Activated CD4-positive, alpha-beta memory T cell treated with anti-CD3 and anti-CD28 coated beads for 36 hours (primary cell): ENCODE measurements at regions of chr9 and their contacts with region 1.

Region 1: DNA sequence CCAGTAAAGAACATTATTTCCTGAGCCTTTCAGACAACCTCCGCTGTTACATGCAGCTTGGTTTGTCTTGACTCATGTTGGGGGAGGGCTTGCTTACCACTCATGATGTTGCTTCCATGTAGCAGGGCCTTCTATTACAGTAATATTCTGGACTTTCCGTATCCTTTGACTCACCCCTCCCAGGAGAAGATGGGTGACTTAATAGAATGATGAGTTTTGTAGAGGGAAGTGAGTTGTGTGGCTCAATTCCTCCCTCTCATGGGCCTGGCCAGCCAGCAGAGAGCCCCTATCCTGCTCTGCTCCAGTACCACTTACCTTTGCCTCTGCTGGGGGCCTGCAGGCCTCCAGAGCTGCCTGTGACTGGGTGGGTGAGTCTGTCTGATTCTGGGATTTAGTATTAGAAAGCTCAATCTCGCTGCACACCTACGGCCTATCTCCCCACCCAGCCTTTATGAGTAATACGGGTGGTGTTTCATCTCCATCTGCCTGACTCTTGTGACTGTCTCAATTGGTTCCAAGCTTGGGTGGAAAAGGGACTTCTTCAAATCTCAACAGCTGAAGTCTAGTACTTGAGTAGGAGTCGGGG is 52.6 kb upstream of the KLF9 start:
- DNase-seq: peak; percentile 72
- H3K4me3 Mint-ChIP-seq: peak overlapping the region; percentile 10
- H3K27ac Mint-ChIP-seq: peak overlapping the region; percentile 91
- H3K4me1 Mint-ChIP-seq: peaks cover 56% of the 10 kb centered on the region
- H3K27me3 Mint-ChIP-seq: no peaks in the 10 kb centered on the region

Region 2: DNA sequence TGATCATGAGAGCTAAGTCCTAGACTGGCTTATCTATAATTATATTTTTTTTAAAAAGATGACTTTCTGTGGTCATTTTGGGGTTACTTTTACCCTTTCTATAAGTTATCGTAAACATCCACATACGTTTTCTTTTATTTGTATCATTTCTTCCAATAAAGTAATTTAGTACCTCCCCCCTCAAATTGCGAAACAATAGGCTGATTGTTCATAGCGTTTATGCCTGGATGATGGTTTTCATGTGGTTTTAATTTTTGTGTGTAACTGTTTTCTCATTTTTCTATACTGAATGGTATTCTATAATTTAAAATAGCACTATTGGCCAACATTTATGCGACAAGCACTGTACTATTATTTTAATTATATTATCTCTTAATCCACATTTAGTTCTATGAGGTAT is 163.8 kb before region 1 on chr9:
- CTCF ChIA-PET with region 1: no interaction called
- POLR2A ChIA-PET with region 1: no interaction called
- intact Hi-C with region 1: no loop called
- DNase-seq: no peak
- H3K4me3 Mint-ChIP-seq: no peak overlapping the region
- H3K27ac Mint-ChIP-seq: no peak overlapping the region
- H3K4me1 Mint-ChIP-seq: peaks cover 11% of the 10 kb centered on the region
- H3K27me3 Mint-ChIP-seq: no peaks in the 10 kb centered on the region

Region 3: GRCh38 chr9:70413798-70414775 is 53.0 kb before region 1 on chr9 and contains the start of gene KLF9:
- CTCF ChIA-PET with region 1: interaction called, 3 read pairs
- POLR2A ChIA-PET with region 1: interaction called, 7 read pairs
- intact Hi-C with region 1: loop called (anchors 5 kb)
- DNase-seq: peak; percentile 96
- H3K4me3 Mint-ChIP-seq: peak within 1 kb of the TSS; percentile 97
- H3K27ac Mint-ChIP-seq: peak within 1 kb of the TSS; percentile 100
- H3K4me1 Mint-ChIP-seq: peaks cover 37% of the 10 kb centered on the region
- H3K27me3 Mint-ChIP-seq: peaks cover 2% of the 10 kb centered on the region
- total RNA-seq, gene KLF9: 23.7 to 24.5 TPM

Region 4: GRCh38 chr9:70419546-70420266 is 47.4 kb before region 1 on chr9:
- CTCF ChIA-PET with region 1: interaction called, 3 read pairs
- POLR2A ChIA-PET with region 1: interaction called, 13 read pairs
- intact Hi-C with region 1: loop called (anchors 1 kb)
- DNase-seq: peak; percentile 94
- H3K4me3 Mint-ChIP-seq: peak overlapping the region; percentile 92
- H3K27ac Mint-ChIP-seq: peak overlapping the region; percentile 99
- H3K4me1 Mint-ChIP-seq: peaks cover 39% of the 10 kb centered on the region
- H3K27me3 Mint-ChIP-seq: no peaks in the 10 kb centered on the region

Region 5: DNA sequence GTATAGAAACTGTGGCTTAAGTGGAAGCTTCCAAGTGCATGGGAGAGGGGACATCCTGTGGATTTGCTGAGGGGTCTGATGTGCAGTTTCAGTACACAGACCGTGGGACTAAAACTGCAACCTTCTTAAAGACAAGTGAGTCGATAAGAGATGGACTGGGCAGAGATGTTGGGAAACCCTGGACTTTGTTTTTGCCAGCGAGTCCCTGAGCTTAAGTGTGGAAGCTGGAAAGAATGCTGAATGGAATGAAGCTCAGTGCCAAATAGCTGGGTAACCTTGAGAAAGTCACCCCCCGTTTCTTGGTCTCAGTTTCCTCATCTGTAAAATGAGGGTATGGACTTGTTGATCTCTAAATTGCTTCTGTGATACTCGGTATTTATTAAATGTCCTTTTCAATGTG is 15.3 kb before region 1 on chr9:
- CTCF ChIA-PET with region 1: no interaction called
- POLR2A ChIA-PET with region 1: no interaction called
- intact Hi-C with region 1: no loop called
- DNase-seq: no peak
- H3K4me3 Mint-ChIP-seq: no peak overlapping the region
- H3K27ac Mint-ChIP-seq: no peak overlapping the region
- H3K4me1 Mint-ChIP-seq: peaks cover 2% of the 10 kb centered on the region
- H3K27me3 Mint-ChIP-seq: no peaks in the 10 kb centered on the region

Region 6: DNA sequence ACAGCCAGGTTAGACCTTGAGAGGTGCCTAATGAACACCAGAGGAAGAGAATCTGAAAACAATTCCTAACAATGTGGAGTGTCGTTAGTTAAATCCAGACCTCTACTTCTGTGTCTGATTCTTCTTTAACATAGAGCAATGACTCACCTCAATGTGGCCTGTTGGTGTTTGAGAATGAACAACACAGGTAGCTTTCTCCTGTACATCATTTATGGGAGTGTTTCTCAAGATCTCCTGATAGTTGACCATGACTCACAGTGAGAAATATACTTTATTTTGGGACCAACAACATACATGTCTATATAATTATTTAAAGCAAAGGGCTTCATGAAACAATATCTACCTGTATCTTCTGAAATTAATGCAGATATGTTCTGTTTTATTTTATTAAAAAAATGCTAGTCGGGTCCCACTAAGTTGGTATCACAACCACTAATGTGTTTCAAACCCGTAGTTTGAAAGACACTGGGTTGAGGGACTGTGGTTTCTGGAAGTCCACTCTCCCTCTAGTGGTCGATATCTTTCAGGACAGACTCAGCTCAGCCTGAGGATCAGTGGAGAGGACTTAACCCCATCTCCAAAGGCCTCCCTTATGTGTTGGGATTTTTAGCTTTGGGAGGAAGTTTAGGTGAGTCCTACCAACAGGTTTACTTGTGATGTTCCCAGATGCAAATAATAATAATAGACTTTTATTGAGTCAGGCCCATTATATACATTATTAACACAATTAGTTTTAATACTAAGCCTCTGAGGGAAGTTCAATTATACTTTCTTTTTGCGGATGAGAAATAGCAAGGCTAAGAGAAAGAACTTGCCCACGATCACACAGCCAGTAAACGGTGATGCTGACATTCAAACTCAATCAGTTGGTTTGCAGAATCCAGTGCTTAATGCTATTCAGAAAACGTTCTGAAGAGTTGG is 17.4 kb after region 1 on chr9:
- CTCF ChIA-PET with region 1: interaction called, 4 read pairs
- POLR2A ChIA-PET with region 1: no interaction called
- intact Hi-C with region 1: loop called (anchors 2 kb)
- DNase-seq: peak; percentile 21
- H3K4me3 Mint-ChIP-seq: no peak overlapping the region
- H3K27ac Mint-ChIP-seq: no peak overlapping the region
- H3K4me1 Mint-ChIP-seq: peaks cover 7% of the 10 kb centered on the region
- H3K27me3 Mint-ChIP-seq: no peaks in the 10 kb centered on the region

Region 7: GRCh38 chr9:70519912-70520724 is 53.0 kb after region 1 on chr9:
- CTCF ChIA-PET with region 1: no interaction called
- POLR2A ChIA-PET with region 1: no interaction called
- intact Hi-C with region 1: loop called (anchors 1 kb)
- DNase-seq: peak; percentile 31
- H3K4me3 Mint-ChIP-seq: peak overlapping the region; percentile 58
- H3K27ac Mint-ChIP-seq: peak overlapping the region; percentile 88
- H3K4me1 Mint-ChIP-seq: peaks cover 30% of the 10 kb centered on the region
- H3K27me3 Mint-ChIP-seq: peaks cover 1% of the 10 kb centered on the region